ENCODE measurements at regions of chrX and their contacts with region 1.

Region 1: DNA sequence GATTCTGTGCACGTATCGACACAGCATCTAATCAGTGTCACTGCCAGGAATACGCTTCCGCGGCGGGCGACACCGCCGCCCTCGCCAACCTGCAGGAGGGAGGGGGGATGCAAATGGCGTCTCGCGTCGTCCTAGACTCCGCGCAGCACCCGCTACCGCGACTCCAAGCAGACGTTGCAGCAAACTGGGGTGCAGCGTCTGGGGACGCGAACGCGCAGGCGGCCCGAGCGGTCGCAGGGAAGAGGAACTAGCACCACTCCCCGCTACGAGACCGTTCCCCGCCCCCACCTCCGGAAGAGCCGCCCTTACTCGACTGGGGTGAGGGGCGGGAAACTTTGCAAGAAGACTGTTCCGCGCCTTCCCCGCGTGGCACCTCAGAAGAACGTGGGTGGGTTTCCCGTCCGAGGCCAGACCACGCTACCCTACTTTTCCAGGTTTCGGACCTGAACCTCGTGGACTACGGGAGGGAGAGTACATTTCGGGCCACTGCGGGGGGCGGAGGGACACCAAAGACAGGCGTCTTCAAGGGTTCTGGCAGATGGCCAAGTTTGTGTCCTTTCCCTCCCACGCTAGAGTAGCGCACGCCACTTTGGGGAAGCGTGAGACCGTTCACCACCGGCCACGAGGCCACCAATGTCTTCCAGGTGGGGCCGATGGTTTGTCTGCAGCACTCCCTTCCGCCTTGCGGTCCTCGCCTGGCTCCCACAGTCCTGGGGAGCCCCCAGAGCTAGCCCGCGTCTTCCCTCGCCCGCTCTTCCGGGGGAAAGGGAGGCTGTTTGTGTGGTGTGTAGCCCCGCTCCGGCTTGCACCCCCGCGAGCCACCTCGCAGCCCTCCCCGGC is 78.0 kb upstream of the BCOR start:
- DNase-seq: peak; percentile 60 to 91 (median 83)
- ATAC-seq: peak; percentile 58
- H3K4me3 ChIP-seq: peak overlapping the region; percentile 73
- H3K4me3 Mint-ChIP-seq: peak overlapping the region; percentile 89 to 93 (median 90)
- H3K27ac ChIP-seq: peak overlapping the region; percentile 98
- H3K27ac Mint-ChIP-seq: peak overlapping the region; percentile 96 to 100 (median 98)
- H3K4me1 ChIP-seq: peaks cover 13 to 18% of the 10 kb centered on the region in 2 donors
- H3K4me1 Mint-ChIP-seq: peaks cover 5 to 46% (median 36%) of the 10 kb centered on the region in 7 donors
- H3K27me3 ChIP-seq: no peaks in the 10 kb centered on the region
- H3K27me3 Mint-ChIP-seq: no peaks in the 10 kb centered on the region

Region 2: DNA sequence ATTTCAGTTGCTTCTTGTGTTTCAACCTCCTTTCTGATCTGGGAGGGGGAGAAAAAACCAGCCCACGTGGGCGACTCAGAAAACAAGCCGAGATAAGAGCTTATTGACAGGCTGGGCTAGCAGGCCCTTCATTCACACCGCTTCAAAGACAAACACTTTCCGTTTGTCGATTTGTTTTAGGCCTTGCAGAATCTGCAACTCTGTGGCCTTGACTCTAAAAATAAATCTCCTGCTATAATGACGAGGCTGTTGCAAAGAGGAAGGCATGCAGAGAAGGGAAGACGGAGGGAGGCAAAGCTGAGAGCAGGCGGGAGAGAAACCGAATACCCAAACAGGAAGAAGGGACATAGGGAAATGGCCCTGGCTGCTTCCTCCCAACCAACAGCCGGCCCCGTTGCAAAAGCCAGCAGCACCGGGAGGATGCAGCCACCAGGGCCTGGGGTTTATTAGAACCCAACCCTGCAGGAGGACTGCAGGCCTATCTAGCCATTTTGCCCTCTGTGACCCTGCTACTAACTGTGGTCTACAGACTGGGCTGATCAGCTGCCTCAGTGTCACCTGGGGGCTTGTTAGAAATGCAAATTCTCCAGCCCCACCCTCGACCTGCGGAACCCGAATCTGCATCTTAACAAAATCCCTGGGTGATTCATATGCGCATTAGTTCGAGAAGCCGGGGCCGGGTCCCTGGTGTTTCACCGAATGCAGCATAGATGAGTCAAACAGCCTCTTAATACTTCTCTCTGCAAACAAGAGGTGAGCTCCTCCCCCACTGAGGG is 403.5 kb before region 1 on chrX:
- CTCF ChIA-PET with region 1: no interaction called
- POLR2A ChIA-PET with region 1: interaction called, 9 read pairs
- intact Hi-C with region 1: loop called (anchors 2 to 5 kb)
- DNase-seq: peak in 6 of 9 donors; percentile 18 to 52 (median 30)
- ATAC-seq: peak; percentile 63
- H3K4me3 ChIP-seq: peak overlapping the region; percentile 17
- H3K4me3 Mint-ChIP-seq: peak overlapping the region; percentile 43 to 80 (median 74)
- H3K27ac ChIP-seq: peak overlapping the region; percentile 43
- H3K27ac Mint-ChIP-seq: peak overlapping the region; percentile 86 to 98 (median 94)
- H3K4me1 ChIP-seq: peaks cover 26 to 32% of the 10 kb centered on the region in 2 donors
- H3K4me1 Mint-ChIP-seq: peaks cover 20 to 50% (median 43%) of the 10 kb centered on the region in 7 donors
- H3K27me3 ChIP-seq: no peaks in the 10 kb centered on the region
- H3K27me3 Mint-ChIP-seq: no peaks in the 10 kb centered on the region

Region 3: DNA sequence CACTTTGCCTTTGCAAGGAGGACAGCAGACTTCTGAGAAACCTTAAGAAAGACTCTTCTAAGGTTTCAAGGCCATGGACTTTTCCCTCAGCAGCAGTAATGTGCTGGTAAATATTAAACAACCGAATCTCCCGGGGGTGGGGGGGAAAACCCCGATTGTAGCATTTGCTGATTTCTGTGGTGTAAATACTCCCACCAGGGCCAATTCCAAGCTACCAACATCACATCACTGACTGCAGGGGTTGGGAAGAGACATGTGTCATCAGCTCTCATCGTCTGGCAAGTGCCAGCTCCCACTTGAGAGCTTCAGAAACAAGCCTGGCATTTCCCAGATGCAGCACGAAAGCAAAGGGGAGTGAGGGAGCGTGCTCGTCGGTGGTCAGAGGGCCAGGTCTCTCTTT is 179.2 kb before region 1 on chrX:
- CTCF ChIA-PET with region 1: no interaction called
- POLR2A ChIA-PET with region 1: no interaction called
- intact Hi-C with region 1: no loop called
- DNase-seq: no peak
- ATAC-seq: no peak
- H3K4me3 ChIP-seq: no peak overlapping the region
- H3K4me3 Mint-ChIP-seq: no peak overlapping the region
- H3K27ac ChIP-seq: no peak overlapping the region
- H3K27ac Mint-ChIP-seq: peak overlapping the region in 1 of 9 donors; percentile 56
- H3K4me1 ChIP-seq: no peaks in the 10 kb centered on the region
- H3K4me1 Mint-ChIP-seq: peaks cover 0 to 3% (median 0%) of the 10 kb centered on the region in 7 donors
- H3K27me3 ChIP-seq: no peaks in the 10 kb centered on the region
- H3K27me3 Mint-ChIP-seq: peaks cover 0 to 4% (median 0%) of the 10 kb centered on the region in 5 donors

Region 4: GRCh38 chrX:40121683-40122017 is 54.1 kb before region 1 on chrX:
- CTCF ChIA-PET with region 1: no interaction called
- POLR2A ChIA-PET with region 1: no interaction called
- intact Hi-C with region 1: no loop called
- DNase-seq: no peak
- ATAC-seq: no peak
- H3K4me3 ChIP-seq: no peak overlapping the region
- H3K4me3 Mint-ChIP-seq: peak overlapping the region in 1 of 10 donors; percentile 1
- H3K27ac ChIP-seq: no peak overlapping the region
- H3K27ac Mint-ChIP-seq: no peak overlapping the region
- H3K4me1 ChIP-seq: peaks cover 0 to under 1% of the 10 kb centered on the region in 2 donors
- H3K4me1 Mint-ChIP-seq: peaks cover 0 to 7% (median 0%) of the 10 kb centered on the region in 7 donors
- H3K27me3 ChIP-seq: no peaks in the 10 kb centered on the region
- H3K27me3 Mint-ChIP-seq: no peaks in the 10 kb centered on the region

Region 5: GRCh38 chrX:40153335-40154249 is 22.1 kb before region 1 on chrX:
- CTCF ChIA-PET with region 1: interaction called, 3 read pairs
- POLR2A ChIA-PET with region 1: interaction called, 113 read pairs
- intact Hi-C with region 1: loop called in 1 of 2 experiments (anchors 1 kb)
- DNase-seq: peak in 4 of 9 donors; percentile 32 to 75 (median 56)
- ATAC-seq: peak; percentile 70
- H3K4me3 ChIP-seq: peak overlapping the region; percentile 50
- H3K4me3 Mint-ChIP-seq: peak overlapping the region; percentile 81 to 88 (median 84)
- H3K27ac ChIP-seq: peak overlapping the region; percentile 27
- H3K27ac Mint-ChIP-seq: peak overlapping the region in 7 of 9 donors; percentile 39 to 84 (median 70)
- H3K4me1 ChIP-seq: peaks cover 0 to 4% of the 10 kb centered on the region in 2 donors
- H3K4me1 Mint-ChIP-seq: peaks cover 0 to 22% (median 14%) of the 10 kb centered on the region in 7 donors
- H3K27me3 ChIP-seq: no peaks in the 10 kb centered on the region
- H3K27me3 Mint-ChIP-seq: peaks cover 0 to 8% (median 0%) of the 10 kb centered on the region in 5 donors

Region 6: DNA sequence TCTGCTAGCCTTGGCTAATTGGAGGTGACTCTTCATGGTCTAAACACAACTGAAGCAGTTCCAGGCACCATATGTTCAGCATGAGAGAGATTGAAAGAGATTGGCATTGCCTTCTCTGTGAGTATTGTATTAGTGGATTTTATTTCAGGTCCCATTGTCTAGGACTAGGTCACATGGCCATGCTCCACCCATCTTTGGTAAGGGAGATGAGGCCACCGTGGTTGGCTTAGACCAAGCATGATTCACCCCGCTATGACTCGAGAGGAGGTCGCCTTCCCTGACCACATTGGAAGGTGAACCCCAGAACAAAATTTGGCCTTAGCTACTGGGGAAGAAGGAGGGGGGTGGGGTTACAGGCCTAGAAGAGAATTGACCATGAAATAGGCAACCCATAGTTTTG is 31.9 kb after region 1 on chrX:
- CTCF ChIA-PET with region 1: no interaction called
- POLR2A ChIA-PET with region 1: interaction called, 14 read pairs
- intact Hi-C with region 1: loop called (anchors 2 to 5 kb)
- DNase-seq: peak in 1 of 9 donors; percentile 22
- ATAC-seq: peak; percentile 68
- H3K4me3 ChIP-seq: no peak overlapping the region
- H3K4me3 Mint-ChIP-seq: no peak overlapping the region
- H3K27ac ChIP-seq: no peak overlapping the region
- H3K27ac Mint-ChIP-seq: no peak overlapping the region
- H3K4me1 ChIP-seq: peaks cover under 1 to 2% of the 10 kb centered on the region in 2 donors
- H3K4me1 Mint-ChIP-seq: peaks cover 0 to 16% (median 14%) of the 10 kb centered on the region in 7 donors
- H3K27me3 ChIP-seq: no peaks in the 10 kb centered on the region
- H3K27me3 Mint-ChIP-seq: no peaks in the 10 kb centered on the region

Region 7: GRCh38 chrX:40244980-40245379 is 69.2 kb after region 1 on chrX:
- CTCF ChIA-PET with region 1: interaction called, 5 read pairs
- POLR2A ChIA-PET with region 1: interaction called, 17 read pairs
- intact Hi-C with region 1: loop called in 1 of 2 experiments (anchors 5 kb)
- DNase-seq: peak in 6 of 9 donors; percentile 9 to 37 (median 19)
- ATAC-seq: peak; percentile 45
- H3K4me3 ChIP-seq: no peak overlapping the region
- H3K4me3 Mint-ChIP-seq: peak overlapping the region; percentile 3 to 75 (median 26)
- H3K27ac ChIP-seq: no peak overlapping the region
- H3K27ac Mint-ChIP-seq: peak overlapping the region in 1 of 9 donors; percentile 21
- H3K4me1 ChIP-seq: peaks cover 0 to 13% of the 10 kb centered on the region in 2 donors
- H3K4me1 Mint-ChIP-seq: peaks cover 6 to 14% (median 13%) of the 10 kb centered on the region in 7 donors
- H3K27me3 ChIP-seq: no peaks in the 10 kb centered on the region
- H3K27me3 Mint-ChIP-seq: peaks cover 0 to 6% (median 2%) of the 10 kb centered on the region in 5 donors

Measured in naive thymus-derived CD4-positive, alpha-beta T cell (primary cell).